Aorta (tissue), 5 donors: ENCODE measurements at regions of chr15 and their contacts with region 1.

Region 1: GRCh38 chr15:78077058-78077877 is at the start of gene TBC1D2B:
- DNase-seq: peak; percentile 80 to 91
- ATAC-seq: peak; percentile 82
- H3K4me3 ChIP-seq: peak within 1 kb of the TSS; percentile 82 to 91
- H3K27ac ChIP-seq: peak within 1 kb of the TSS in 1 of 2 donors; percentile 73
- H3K4me1 ChIP-seq: no peaks in the 10 kb centered on the region
- H3K27me3 ChIP-seq: no peaks in the 10 kb centered on the region
- total RNA-seq, gene TBC1D2B: 49.0 to 109 TPM

Region 2: GRCh38 chr15:77992356-77993222 is 84.7 kb before region 1 on chr15:
- intact Hi-C with region 1: loop called in 1 of 2 experiments (anchors 5 kb)
- DNase-seq: peak in 1 of 2 donors; percentile 75
- ATAC-seq: no peak
- H3K4me3 ChIP-seq: no peak overlapping the region
- H3K27ac ChIP-seq: peak overlapping the region; percentile 14 to 66
- H3K4me1 ChIP-seq: peaks cover 0 to 5% of the 10 kb centered on the region in 2 donors
- H3K27me3 ChIP-seq: no peaks in the 10 kb centered on the region

Region 3: GRCh38 chr15:78000091-78000926 is 77.0 kb before region 1 on chr15:
- intact Hi-C with region 1: loop called (anchors 5 kb)
- DNase-seq: peak in 1 of 2 donors; percentile 85
- ATAC-seq: peak; percentile 51
- H3K4me3 ChIP-seq: no peak overlapping the region
- H3K27ac ChIP-seq: no peak overlapping the region
- H3K4me1 ChIP-seq: no peaks in the 10 kb centered on the region
- H3K27me3 ChIP-seq: no peaks in the 10 kb centered on the region

Region 4: DNA sequence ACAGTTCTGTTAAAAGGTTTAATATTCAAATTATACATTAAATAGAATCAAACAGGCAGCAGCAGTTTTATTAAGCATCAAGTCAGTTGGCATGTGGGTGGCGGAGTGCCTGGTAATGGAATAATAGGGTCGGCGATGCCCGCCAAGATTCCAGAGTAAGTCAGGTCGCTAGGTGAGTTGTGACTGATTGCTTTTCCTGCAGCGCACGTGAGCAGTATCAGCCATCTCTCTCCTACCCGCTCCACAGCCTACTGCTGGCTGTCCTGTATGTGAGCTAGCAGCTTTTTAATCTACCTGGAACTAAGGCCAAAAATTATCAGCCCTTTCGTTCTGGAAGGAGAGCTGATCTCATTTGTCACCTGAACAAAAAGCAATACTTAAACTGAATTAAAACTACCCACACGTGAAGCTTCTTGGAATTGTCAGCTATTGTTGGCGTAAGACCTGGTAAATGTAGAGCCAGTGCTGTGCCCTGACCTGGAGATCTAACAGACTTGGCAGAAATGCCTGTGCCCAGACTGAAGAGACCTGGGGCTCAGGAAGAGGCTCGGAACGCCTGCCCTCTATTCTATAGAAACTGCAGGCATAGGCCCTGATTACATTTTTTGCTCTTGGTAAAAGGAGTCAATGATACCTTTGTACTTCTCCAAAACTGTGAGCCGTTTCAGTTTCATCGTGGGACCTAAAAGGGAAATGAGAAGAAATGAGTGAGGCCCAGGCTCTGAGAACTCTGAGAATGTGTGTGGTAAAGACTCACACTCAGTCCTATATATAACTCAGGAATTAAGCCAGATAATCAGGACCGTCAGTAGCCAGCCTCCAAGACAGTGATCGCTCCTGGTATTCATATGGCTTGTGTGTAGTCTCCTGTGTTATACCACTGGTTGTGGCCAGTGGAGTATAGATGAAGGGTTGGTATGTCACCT is 93.8 kb after region 1 on chr15:
- intact Hi-C with region 1: no loop called
- DNase-seq: no peak
- ATAC-seq: no peak
- H3K4me3 ChIP-seq: no peak overlapping the region
- H3K27ac ChIP-seq: no peak overlapping the region
- H3K4me1 ChIP-seq: no peaks in the 10 kb centered on the region
- H3K27me3 ChIP-seq: no peaks in the 10 kb centered on the region